ENCODE measurements at regions of chr9 and their contacts with region 1.

Region 1: GRCh38 chr9:133342069-133342406 is 5.9 kb downstream of the MED22 start:
- DNase-seq: no peak
- ATAC-seq: no peak
- H3K4me3 Mint-ChIP-seq: no peak overlapping the region
- H3K27ac Mint-ChIP-seq: peak overlapping the region; percentile 78
- H3K4me1 Mint-ChIP-seq: peaks cover 53% of the 10 kb centered on the region
- H3K27me3 Mint-ChIP-seq: no peaks in the 10 kb centered on the region

Region 2: DNA sequence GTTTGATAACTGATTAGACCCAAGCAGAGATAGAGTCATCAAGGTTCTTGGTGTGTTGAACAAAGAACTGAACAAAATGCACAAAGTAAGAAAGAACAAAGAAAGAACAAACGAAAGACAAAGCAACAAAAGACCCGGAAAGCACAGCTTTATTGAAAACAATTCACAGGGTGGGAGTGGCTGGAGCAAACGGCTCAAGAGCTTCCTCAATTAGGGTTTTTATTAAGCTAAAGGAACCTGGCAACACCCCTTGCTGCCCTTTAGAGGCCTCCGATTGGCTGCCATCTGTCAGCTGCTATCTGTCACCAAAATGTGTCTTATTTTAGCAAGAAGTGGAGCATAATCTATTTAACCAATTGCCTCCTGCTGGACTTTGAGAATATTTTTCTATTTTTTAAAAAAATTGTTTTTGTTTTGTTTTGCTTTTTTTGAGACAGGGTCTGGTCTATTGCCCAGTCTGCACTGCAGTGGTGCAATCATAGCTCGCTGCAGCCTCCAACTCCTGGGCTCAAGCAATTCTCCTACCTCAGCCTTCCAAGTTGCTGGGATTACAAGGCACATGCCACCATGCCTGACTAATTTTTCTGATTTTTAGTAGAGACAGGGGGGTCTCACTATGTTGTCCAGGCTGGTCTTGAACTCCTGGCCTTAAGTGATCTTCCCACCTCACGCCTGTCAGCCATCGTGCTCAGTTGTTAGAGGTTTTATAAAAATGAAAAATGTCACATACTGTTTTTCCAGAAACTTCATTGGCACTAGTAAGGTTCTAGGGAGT is 59.4 kb before region 1 on chr9:
- CTCF ChIA-PET with region 1: no interaction called
- POLR2A ChIA-PET with region 1: no interaction called
- DNase-seq: no peak
- ATAC-seq: no peak
- H3K4me3 Mint-ChIP-seq: no peak overlapping the region
- H3K27ac Mint-ChIP-seq: no peak overlapping the region
- H3K4me1 Mint-ChIP-seq: no peaks in the 10 kb centered on the region
- H3K27me3 Mint-ChIP-seq: no peaks in the 10 kb centered on the region

Region 3: DNA sequence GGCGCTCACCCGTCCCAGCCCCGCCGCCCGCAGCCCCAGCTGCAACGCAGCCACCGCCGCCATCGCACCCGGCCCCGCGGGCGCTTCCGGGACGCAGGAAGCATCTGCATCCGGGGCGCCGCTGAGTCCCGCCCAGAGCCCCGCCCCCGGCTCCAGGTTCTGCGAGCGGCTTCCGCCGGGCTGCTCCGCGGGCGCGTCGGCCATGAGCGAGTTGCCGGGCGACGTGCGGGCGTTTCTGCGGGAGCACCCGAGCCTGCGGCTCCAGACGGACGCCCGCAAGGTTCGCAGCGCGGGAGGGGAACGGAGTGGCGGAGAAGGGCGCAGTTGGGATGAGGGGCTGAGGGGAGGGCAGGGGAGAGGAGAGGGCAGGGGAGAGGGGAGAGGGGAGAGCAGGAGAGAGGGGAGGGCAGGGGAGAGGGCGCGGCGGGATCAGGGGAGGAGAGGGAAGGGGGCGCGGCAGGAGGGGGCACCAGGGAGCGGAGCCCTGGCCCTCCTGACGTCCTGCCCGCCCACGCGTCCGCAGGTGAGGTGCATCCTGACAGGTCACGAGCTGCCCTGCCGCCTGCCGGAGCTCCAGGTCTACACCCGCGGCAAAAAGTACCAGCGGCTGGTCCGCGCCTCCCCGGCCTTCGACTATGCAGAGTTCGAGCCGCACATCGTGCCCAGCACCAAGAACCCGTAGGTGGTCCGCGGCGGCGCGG is 14.5 kb after region 1 on chr9 and contains the starts of genes SURF1 and SURF2:
- CTCF ChIA-PET with region 1: interaction called, 8 read pairs
- POLR2A ChIA-PET with region 1: interaction called, 23 read pairs
- DNase-seq: peak; percentile 94
- ATAC-seq: peak; percentile 89
- H3K4me3 Mint-ChIP-seq: peak within 1 kb of the TSS; percentile 86
- H3K27ac Mint-ChIP-seq: peak within 1 kb of the TSS; percentile 90
- H3K4me1 Mint-ChIP-seq: peaks cover 56% of the 10 kb centered on the region
- H3K27me3 Mint-ChIP-seq: no peaks in the 10 kb centered on the region
- total RNA-seq, gene SURF1: 37.4 to 39.1 TPM
- total RNA-seq, gene SURF2: 18.4 to 20.7 TPM

Region 4: DNA sequence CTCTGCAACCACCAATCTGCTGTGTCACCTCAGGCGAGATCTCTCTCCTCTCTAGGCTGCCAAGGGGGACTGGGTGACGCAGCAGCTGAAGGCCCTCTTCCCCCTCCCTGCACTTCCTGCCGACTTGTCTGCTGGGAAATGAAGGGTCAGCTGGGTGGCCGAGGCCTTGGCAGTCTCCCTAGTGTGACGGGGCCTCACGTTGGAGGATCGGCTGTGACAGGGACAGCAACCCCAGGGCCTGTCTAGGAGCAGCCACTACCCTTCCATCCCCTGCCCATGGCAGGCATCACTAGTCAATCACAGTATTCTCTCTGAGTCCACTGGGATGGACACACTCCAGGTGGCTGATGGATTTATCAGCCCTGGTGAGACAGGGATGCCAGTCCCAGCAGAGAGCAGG is 503.4 kb after region 1 on chr9:
- CTCF ChIA-PET with region 1: no interaction called
- POLR2A ChIA-PET with region 1: no interaction called
- DNase-seq: no peak
- ATAC-seq: no peak
- H3K4me3 Mint-ChIP-seq: no peak overlapping the region
- H3K27ac Mint-ChIP-seq: no peak overlapping the region
- H3K4me1 Mint-ChIP-seq: peaks cover 7% of the 10 kb centered on the region
- H3K27me3 Mint-ChIP-seq: no peaks in the 10 kb centered on the region